ENCODE measurements at regions of chr1 and their contacts with region 1.

Region 1: GRCh38 chr1:93552741-93553455 is 105.0 kb downstream of the FNBP1L start:
- H3K4me3 Mint-ChIP-seq: no peak overlapping the region
- H3K27ac Mint-ChIP-seq: peak overlapping the region; percentile 64
- H3K4me1 Mint-ChIP-seq: peaks cover 31% of the 10 kb centered on the region
- H3K27me3 Mint-ChIP-seq: no peaks in the 10 kb centered on the region

Region 2: GRCh38 chr1:93453911-93454310 is 99.0 kb before region 1 on chr1:
- intact Hi-C with region 1: loop called (anchors 10 kb)
- H3K4me3 Mint-ChIP-seq: no peak overlapping the region
- H3K27ac Mint-ChIP-seq: no peak overlapping the region
- H3K4me1 Mint-ChIP-seq: peaks cover 12% of the 10 kb centered on the region
- H3K27me3 Mint-ChIP-seq: peaks cover 6% of the 10 kb centered on the region

Region 3: GRCh38 chr1:93489756-93490155 is 63.1 kb before region 1 on chr1:
- intact Hi-C with region 1: loop called (anchors 10 kb)
- H3K4me3 Mint-ChIP-seq: no peak overlapping the region
- H3K27ac Mint-ChIP-seq: no peak overlapping the region
- H3K4me1 Mint-ChIP-seq: peaks cover 8% of the 10 kb centered on the region
- H3K27me3 Mint-ChIP-seq: no peaks in the 10 kb centered on the region

Measured in dendritic cell treated with granulocyte-macrophage colony-stimulating factor and Interleukin-4, amounts not matched to agents 40 ng/mL and 50 ng/mL, for 4 days (primary cell).